ENCODE measurements at regions of chr17 and their contacts with region 1.

Region 1: DNA sequence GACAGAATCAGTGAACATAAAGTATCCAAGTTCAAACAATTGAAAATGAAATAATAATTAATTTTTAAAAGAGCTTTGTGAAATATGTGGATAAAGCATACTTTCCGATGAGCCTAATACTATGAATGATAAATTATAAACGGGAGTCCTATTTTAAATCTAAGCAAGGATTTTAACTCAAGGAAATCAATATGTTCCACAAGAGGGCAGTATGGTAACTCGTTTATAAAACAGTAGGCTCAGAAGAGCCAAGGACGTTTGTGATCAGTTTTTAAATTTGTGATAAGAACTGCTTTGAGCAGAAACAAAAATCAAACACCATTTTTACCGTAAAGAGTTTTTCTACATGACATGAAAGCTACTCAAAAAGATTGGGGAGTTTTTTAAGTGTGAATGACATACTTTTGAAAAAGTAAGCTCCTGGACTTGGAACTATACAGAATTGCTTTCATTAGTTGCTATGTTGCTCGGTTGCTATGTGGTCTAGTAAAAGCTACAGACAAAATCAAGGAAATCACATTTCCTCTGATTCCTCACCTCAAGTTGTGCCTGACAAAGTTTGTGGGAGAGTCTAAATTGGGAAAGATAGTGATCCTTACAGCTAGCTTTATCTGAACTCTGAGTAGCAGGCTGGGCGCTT is 11.8 kb upstream of the TEKT1 start:
- DNase-seq: peak; percentile 54
- CTCF ChIP-seq: peak; percentile 50

Region 2: GRCh38 chr17:6603744-6604325 is 239.5 kb before region 1 on chr17:
- in situ Hi-C with region 1: no loop called
- DNase-seq: no peak
- CTCF ChIP-seq: no peak

Region 3: GRCh38 chr17:6894206-6894528 is 50.8 kb after region 1 on chr17:
- in situ Hi-C with region 1: loop called (anchors 10 kb)
- DNase-seq: peak; percentile 52
- CTCF ChIP-seq: peak; percentile 71

Measured in GM13977 (cell line).